WTC11 (cell line): ENCODE measurements at regions of chr19 and their contacts with region 1.

Region 1: DNA sequence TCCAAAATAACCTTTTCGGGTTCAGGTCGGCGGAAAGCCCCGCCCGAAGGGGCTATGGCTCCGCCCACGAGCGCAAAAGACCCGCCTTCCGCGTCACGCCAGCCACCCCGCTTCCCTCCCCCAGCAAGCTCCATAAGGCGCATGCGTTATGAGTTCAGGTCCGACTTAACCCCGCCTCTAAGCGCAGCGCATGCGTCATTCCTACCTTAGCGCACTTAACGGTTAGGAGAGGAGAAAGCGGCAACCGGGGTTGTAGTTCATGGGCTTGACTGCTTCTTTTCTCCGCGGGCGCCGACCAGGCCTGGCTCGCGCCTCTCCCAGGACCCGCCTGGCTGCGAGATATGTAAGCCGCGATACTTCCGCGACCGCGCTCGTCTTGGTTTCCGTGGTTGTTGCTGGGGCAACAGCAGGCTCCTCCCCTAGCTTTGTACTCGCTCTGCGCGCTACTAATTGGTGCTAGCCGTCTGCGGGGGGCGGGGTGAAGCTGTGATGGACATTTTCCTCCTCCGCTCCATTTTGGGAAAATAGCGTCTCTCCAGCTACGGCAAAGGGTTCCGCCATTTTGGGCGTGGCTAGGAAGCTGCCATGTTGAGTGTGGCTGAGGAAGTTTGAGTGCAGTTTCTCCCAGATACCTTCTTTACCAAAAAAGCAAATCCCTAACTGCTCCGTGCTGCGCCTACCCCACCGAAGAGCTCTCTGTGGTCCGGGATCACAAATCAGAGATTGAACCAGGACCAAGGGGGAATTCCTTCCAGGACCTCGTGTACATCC is at the start of gene B9D2:
- DNase-seq: peak; percentile 98
- ATAC-seq: peak; percentile 96
- H3K4me3 Mint-ChIP-seq: peak within 1 kb of the TSS; percentile 90
- H3K27ac Mint-ChIP-seq: peak within 1 kb of the TSS; percentile 97
- H3K4me1 Mint-ChIP-seq: peaks cover 6% of the 10 kb centered on the region; the same call in 1 of the 2 replicates
- H3K27me3 Mint-ChIP-seq: no peaks in the 10 kb centered on the region
- CTCF ChIP-seq: no peak
- total RNA-seq, gene B9D2: 4.5 to 6.3 TPM (median 4.7 TPM) in 3 replicates

Region 2: DNA sequence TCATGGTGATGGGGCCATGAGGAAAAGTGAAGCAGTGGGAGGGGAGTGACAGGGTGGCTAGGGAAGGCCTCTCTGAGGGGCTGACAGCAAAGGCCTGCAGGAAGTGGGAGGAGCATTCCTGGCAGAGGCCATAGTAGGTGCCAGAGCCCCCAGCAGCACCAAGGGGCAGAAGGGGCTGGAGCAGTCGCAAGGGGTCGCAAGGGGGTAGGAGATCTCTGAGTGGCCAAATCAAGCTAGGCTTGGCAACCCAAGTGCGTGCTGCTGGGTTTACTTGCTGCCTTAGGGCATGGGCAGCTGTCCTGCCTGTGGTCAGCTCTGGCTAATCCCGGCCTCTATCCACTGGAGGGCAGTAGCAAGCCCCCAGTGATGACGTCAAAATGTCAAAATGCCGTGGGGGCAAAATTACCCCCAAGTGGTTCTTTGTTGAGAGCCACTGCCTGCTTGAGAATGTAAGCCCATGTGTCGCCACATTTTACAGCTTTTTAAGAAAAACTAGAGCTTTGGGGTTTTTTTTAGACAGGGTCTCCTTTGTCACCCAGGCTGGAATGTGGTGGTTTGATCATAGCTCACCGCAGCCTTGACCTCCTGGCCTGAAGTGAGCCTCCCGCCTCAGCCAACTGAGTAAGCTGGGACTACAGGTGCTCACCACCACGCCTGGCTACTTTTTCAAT is 42.2 kb before region 1 on chr19:
- CTCF ChIA-PET with region 1: interaction called, 14 read pairs
- POLR2A ChIA-PET with region 1: no interaction called
- DNase-seq: peak; percentile 70
- ATAC-seq: peak; percentile 60
- H3K4me3 Mint-ChIP-seq: no peak overlapping the region
- H3K27ac Mint-ChIP-seq: no peak overlapping the region
- H3K4me1 Mint-ChIP-seq: peaks cover 43% of the 10 kb centered on the region
- H3K27me3 Mint-ChIP-seq: no peaks in the 10 kb centered on the region; the same call in 1 of the 2 replicates
- CTCF ChIP-seq: peak; percentile 37; the same call in 1 of the 2 replicates

Region 3: GRCh38 chr19:41341669-41342490 is 22.1 kb before region 1 on chr19:
- CTCF ChIA-PET with region 1: interaction called, 11 read pairs
- POLR2A ChIA-PET with region 1: no interaction called
- DNase-seq: peak; percentile 56
- ATAC-seq: peak; percentile 89
- H3K4me3 Mint-ChIP-seq: no peak overlapping the region
- H3K27ac Mint-ChIP-seq: no peak overlapping the region
- H3K4me1 Mint-ChIP-seq: no peaks in the 10 kb centered on the region
- H3K27me3 Mint-ChIP-seq: no peaks in the 10 kb centered on the region
- CTCF ChIP-seq: no peak

Region 4: DNA sequence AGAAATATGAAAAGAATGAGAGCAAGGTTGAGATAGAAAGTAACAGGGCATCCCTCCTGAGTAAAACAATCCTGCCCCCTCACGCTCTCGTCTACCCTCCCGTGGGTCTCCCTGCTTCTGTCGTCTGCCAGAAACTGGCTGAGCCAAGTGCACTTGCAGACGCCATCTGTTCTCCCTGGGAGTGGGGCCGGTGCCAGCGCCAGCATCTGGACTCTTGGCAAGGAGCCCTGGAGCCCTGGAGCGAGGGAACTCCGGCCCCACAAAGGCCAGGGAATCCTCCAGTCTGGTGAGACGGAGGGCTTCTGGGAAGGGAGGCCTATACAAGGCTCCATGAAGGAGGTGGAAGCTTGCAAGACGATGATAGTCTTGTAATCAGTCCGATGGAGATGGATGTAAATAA is 10.1 kb after region 1 on chr19:
- CTCF ChIA-PET with region 1: interaction called, 45 read pairs
- POLR2A ChIA-PET with region 1: no interaction called
- DNase-seq: no peak
- ATAC-seq: no peak
- H3K4me3 Mint-ChIP-seq: no peak overlapping the region
- H3K27ac Mint-ChIP-seq: peak overlapping the region; percentile 83
- H3K4me1 Mint-ChIP-seq: peaks cover 17% of the 10 kb centered on the region
- H3K27me3 Mint-ChIP-seq: peaks cover 14% of the 10 kb centered on the region
- CTCF ChIP-seq: no peak

Region 5: GRCh38 chr19:41439441-41440222 is 75.7 kb after region 1 on chr19 and contains the start of gene DMAC2:
- CTCF ChIA-PET with region 1: interaction called, 12 read pairs
- POLR2A ChIA-PET with region 1: interaction called, 9 read pairs
- DNase-seq: peak; percentile 97
- ATAC-seq: peak; percentile 98
- H3K4me3 Mint-ChIP-seq: no peak within 1 kb of the TSS
- H3K27ac Mint-ChIP-seq: no peak within 1 kb of the TSS
- H3K4me1 Mint-ChIP-seq: peaks cover 13% of the 10 kb centered on the region
- H3K27me3 Mint-ChIP-seq: peaks cover 17% of the 10 kb centered on the region; the same call in 1 of the 2 replicates
- CTCF ChIP-seq: no peak
- total RNA-seq, gene DMAC2: 77.6 to 85.6 TPM (median 82.6 TPM) in 3 replicates

Region 6: DNA sequence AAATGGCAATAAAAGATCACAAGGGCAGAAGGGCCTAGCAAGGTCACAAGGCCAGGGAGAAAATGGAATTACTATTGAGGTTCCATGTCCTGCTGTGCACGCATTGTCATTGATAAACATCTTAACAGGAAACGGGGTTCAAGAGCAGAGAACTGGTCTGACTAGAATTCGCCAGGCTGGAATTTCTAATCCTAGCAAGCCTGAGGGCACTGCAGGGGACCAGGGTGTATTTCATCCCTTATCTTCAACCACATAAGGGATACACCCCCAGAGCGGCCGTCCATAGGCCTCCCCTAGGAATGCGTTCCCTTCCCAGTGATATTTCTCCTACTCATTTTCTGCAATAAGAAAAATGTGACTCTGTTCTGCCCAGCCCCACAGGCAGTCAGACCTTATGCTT is 98.6 kb after region 1 on chr19:
- CTCF ChIA-PET with region 1: no interaction called
- POLR2A ChIA-PET with region 1: no interaction called
- DNase-seq: no peak
- ATAC-seq: no peak
- H3K4me3 Mint-ChIP-seq: no peak overlapping the region
- H3K27ac Mint-ChIP-seq: no peak overlapping the region
- H3K4me1 Mint-ChIP-seq: no peaks in the 10 kb centered on the region
- H3K27me3 Mint-ChIP-seq: peaks cover 38% of the 10 kb centered on the region
- CTCF ChIP-seq: no peak